Naive thymus-derived CD4-positive, alpha-beta T cell (primary cell): ENCODE measurements at regions of chr17 and their contacts with region 1.

Region 1: GRCh38 chr17:43024407-43025289 is at the start of gene RND2:
- DNase-seq: peak; percentile 65 to 85 (median 77)
- ATAC-seq: peak; percentile 81
- H3K4me3 ChIP-seq: peak within 1 kb of the TSS; percentile 70
- H3K4me3 Mint-ChIP-seq: peak within 1 kb of the TSS; percentile 86 to 95 (median 93)
- H3K27ac ChIP-seq: peak within 1 kb of the TSS; percentile 66
- H3K27ac Mint-ChIP-seq: peak within 1 kb of the TSS; percentile 80 to 91 (median 88)
- H3K4me1 ChIP-seq: peaks cover 21% of the 10 kb centered on the region in 2 donors
- H3K4me1 Mint-ChIP-seq: peaks cover 16 to 28% (median 21%) of the 10 kb centered on the region in 7 donors
- H3K27me3 ChIP-seq: no peaks in the 10 kb centered on the region
- H3K27me3 Mint-ChIP-seq: peaks cover 0 to 16% (median 0%) of the 10 kb centered on the region in 5 donors
- total RNA-seq, gene RND2: 0.08 to 0.74 (median 0.38) TPM in 4 of 5 experiments, not detected in the other

Region 2: GRCh38 chr17:42193969-42194899 is 830.4 kb before region 1 on chr17 and contains the start of gene GHDC:
- CTCF ChIA-PET with region 1: no interaction called
- POLR2A ChIA-PET with region 1: no interaction called
- intact Hi-C with region 1: loop called in 1 of 2 experiments (anchors 5 kb)
- DNase-seq: peak; percentile 48 to 83 (median 75)
- ATAC-seq: peak; percentile 94
- H3K4me3 ChIP-seq: peak within 1 kb of the TSS; percentile 98
- H3K4me3 Mint-ChIP-seq: peak within 1 kb of the TSS; percentile 93 to 99 (median 95)
- H3K27ac ChIP-seq: peak within 1 kb of the TSS; percentile 82
- H3K27ac Mint-ChIP-seq: peak within 1 kb of the TSS; percentile 86 to 94 (median 90)
- H3K4me1 ChIP-seq: peaks cover 4 to 19% of the 10 kb centered on the region in 2 donors
- H3K4me1 Mint-ChIP-seq: peaks cover 13 to 33% (median 23%) of the 10 kb centered on the region in 7 donors
- H3K27me3 ChIP-seq: no peaks in the 10 kb centered on the region
- H3K27me3 Mint-ChIP-seq: no peaks in the 10 kb centered on the region
- total RNA-seq, gene GHDC: 15.5 to 29.8 (median 19.9) TPM

Region 3: GRCh38 chr17:42287926-42288802 is 736.5 kb before region 1 on chr17 and contains the start of gene STAT5A:
- CTCF ChIA-PET with region 1: no interaction called
- POLR2A ChIA-PET with region 1: no interaction called
- intact Hi-C with region 1: no loop called
- DNase-seq: peak; percentile 58 to 83 (median 79)
- ATAC-seq: peak; percentile 90
- H3K4me3 ChIP-seq: peak within 1 kb of the TSS; percentile 88
- H3K4me3 Mint-ChIP-seq: peak within 1 kb of the TSS; percentile 87 to 97 (median 93)
- H3K27ac ChIP-seq: peak within 1 kb of the TSS; percentile 93
- H3K27ac Mint-ChIP-seq: peak within 1 kb of the TSS; percentile 93 to 99 (median 96)
- H3K4me1 ChIP-seq: peaks cover 18 to 24% of the 10 kb centered on the region in 2 donors
- H3K4me1 Mint-ChIP-seq: peaks cover 27 to 65% (median 54%) of the 10 kb centered on the region in 7 donors
- H3K27me3 ChIP-seq: no peaks in the 10 kb centered on the region
- H3K27me3 Mint-ChIP-seq: no peaks in the 10 kb centered on the region
- total RNA-seq, gene STAT5A: 111 to 162 (median 150) TPM

Region 4: DNA sequence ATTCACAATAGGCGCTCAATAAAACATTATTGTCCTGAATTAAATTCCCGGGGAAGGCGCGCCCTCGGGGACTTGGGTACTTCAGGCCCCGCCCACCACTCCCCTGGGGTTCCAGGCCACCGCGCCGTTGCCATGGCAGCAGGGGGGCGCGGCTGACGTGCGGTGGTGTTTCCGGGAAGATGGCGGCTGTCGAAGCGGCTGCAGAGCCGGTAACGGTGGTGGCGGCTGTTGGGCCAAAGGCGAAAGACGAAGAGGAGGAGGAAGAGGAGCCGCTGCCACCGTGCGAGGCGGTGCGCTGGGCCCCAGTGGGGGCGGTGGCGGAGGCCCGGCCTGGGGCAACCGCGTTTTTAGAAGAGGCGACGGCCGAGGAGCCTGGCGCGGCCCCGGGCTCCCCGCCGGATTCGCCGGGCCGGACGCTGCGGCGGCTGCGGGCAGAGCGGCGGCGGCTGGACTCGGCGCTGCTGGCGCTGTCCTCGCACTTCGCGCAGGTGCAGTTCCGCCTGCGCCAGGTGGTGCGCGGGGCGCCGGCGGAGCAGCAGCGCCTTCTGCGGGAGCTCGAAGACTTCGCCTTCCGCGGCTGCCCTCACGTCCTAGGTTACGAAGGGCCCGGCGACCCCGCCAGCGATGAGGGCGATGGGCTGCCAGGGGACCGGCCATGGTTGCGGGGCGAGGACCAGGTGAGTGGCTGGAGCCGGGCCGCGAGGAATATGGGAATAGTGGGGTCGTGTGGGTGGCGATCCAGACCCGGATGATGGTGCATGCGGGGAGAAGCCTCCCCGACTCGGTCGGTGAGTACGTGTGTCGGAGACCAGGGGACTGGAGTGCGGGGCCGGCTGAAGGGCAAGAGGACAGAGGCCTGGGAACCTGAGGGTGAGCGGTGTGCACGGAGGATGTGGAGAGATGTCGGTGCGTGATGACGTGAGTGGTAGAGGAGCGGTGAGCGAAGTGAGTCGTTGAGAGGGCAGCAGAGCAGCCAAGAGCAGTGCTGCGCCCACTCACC is 44.0 kb before region 1 on chr17 and contains the start of gene RUNDC1:
- CTCF ChIA-PET with region 1: no interaction called
- POLR2A ChIA-PET with region 1: no interaction called
- intact Hi-C with region 1: no loop called
- DNase-seq: peak; percentile 81 to 93 (median 87)
- ATAC-seq: peak; percentile 93
- H3K4me3 ChIP-seq: peak within 1 kb of the TSS; percentile 81
- H3K4me3 Mint-ChIP-seq: peak within 1 kb of the TSS; percentile 96 to 99 (median 98)
- H3K27ac ChIP-seq: peak within 1 kb of the TSS; percentile 84
- H3K27ac Mint-ChIP-seq: peak within 1 kb of the TSS; percentile 83 to 98 (median 94)
- H3K4me1 ChIP-seq: peaks cover 4 to 16% of the 10 kb centered on the region in 2 donors
- H3K4me1 Mint-ChIP-seq: peaks cover 25 to 42% (median 38%) of the 10 kb centered on the region in 7 donors
- H3K27me3 ChIP-seq: no peaks in the 10 kb centered on the region
- H3K27me3 Mint-ChIP-seq: no peaks in the 10 kb centered on the region
- total RNA-seq, gene RUNDC1: 12.2 to 21.4 (median 19.4) TPM

Region 5: DNA sequence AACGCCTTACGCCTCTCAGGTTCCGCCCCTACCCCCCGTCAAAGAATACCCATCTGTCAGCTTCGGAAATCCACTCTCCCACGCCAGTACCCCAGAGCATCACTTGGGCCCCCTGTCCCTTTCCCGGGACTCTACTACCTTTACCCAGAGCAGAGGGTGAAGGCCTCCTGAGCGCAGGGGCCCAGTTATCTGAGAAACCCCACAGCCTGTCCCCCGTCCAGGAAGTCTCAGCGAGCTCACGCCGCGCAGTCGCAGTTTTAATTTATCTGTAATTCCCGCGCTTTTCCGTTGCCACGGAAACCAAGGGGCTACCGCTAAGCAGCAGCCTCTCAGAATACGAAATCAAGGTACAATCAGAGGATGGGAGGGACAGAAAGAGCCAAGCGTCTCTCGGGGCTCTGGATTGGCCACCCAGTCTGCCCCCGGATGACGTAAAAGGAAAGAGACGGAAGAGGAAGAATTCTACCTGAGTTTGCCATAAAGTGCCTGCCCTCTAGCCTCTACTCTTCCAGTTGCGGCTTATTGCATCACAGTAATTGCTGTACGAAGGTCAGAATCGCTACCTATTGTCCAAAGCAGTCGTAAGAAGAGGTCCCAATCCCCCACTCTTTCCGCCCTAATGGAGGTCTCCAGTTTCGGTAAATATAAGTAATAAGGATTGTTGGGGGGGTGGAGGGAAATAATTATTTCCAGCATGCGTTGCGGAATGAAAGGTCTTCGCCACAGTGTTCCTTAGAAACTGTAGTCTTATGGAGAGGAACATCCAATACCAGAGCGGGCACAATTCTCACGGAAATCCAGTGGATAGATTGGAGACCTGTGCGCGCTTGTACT is 100.7 kb after region 1 on chr17 and contains the start of gene BRCA1:
- CTCF ChIA-PET with region 1: no interaction called
- POLR2A ChIA-PET with region 1: interaction called, 4 read pairs
- intact Hi-C with region 1: loop called in 1 of 2 experiments (anchors 1 kb)
- DNase-seq: peak; percentile 78 to 98 (median 96)
- ATAC-seq: peak; percentile 100
- H3K4me3 ChIP-seq: peak within 1 kb of the TSS; percentile 83
- H3K4me3 Mint-ChIP-seq: peak within 1 kb of the TSS; percentile 88 to 97 (median 94)
- H3K27ac ChIP-seq: peak within 1 kb of the TSS; percentile 83
- H3K27ac Mint-ChIP-seq: peak within 1 kb of the TSS; percentile 88 to 98 (median 93)
- H3K4me1 ChIP-seq: peaks cover 6 to 8% of the 10 kb centered on the region in 2 donors
- H3K4me1 Mint-ChIP-seq: peaks cover 14 to 39% (median 30%) of the 10 kb centered on the region in 7 donors
- H3K27me3 ChIP-seq: no peaks in the 10 kb centered on the region
- H3K27me3 Mint-ChIP-seq: no peaks in the 10 kb centered on the region
- total RNA-seq, gene BRCA1: 2.6 to 54.1 (median 5.4) TPM

Region 6: GRCh38 chr17:43211480-43212402 is 187.1 kb after region 1 on chr17 and contains the start of gene TMEM106A:
- CTCF ChIA-PET with region 1: no interaction called
- POLR2A ChIA-PET with region 1: interaction called, 3 read pairs
- intact Hi-C with region 1: loop called in 1 of 2 experiments (anchors 10 kb)
- DNase-seq: peak; percentile 50 to 72 (median 70)
- ATAC-seq: peak; percentile 93
- H3K4me3 ChIP-seq: peak within 1 kb of the TSS; percentile 89
- H3K4me3 Mint-ChIP-seq: peak within 1 kb of the TSS; percentile 89 to 100 (median 96)
- H3K27ac ChIP-seq: peak within 1 kb of the TSS; percentile 86
- H3K27ac Mint-ChIP-seq: peak within 1 kb of the TSS; percentile 89 to 98 (median 94)
- H3K4me1 ChIP-seq: peaks cover 15 to 17% of the 10 kb centered on the region in 2 donors
- H3K4me1 Mint-ChIP-seq: peaks cover 24 to 55% (median 46%) of the 10 kb centered on the region in 7 donors
- H3K27me3 ChIP-seq: no peaks in the 10 kb centered on the region
- H3K27me3 Mint-ChIP-seq: no peaks in the 10 kb centered on the region
- total RNA-seq, gene TMEM106A: 10.4 to 20.7 (median 13.9) TPM